ENCODE measurements at regions of chr2 and their contacts with region 1.

Region 1: GRCh38 chr2:161160226-161161069 is at the start of gene TANK:
- DNase-seq: peak; percentile 99
- H3K4me3 Mint-ChIP-seq: peak within 1 kb of the TSS; percentile 86
- H3K27ac Mint-ChIP-seq: peak within 1 kb of the TSS; percentile 99
- H3K4me1 Mint-ChIP-seq: peaks cover 20% of the 10 kb centered on the region
- H3K27me3 Mint-ChIP-seq: no peaks in the 10 kb centered on the region
- CTCF ChIP-seq: no peak
- total RNA-seq, gene TANK: 62.0 and 79.6 TPM in 2 replicates

Region 2: DNA sequence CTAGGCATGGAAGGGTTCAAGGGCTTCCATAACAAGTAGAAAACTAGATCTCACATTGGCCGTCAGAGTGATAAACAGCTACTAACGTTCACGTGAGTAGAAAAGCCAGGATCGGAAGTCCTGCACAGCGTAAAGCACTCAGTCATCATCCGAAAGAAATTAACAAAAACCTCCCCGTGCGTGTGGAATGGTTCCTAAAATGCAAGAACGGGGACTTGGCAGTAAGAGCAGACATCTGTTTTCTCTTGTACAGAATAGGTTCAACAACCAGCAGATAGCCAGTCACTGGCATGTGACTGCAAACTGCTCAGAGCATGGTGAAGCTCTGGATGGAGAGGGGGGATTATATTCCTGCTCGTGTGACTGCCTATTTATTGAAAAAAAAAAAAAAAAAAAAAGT is 853.5 kb before region 1 on chr2:
- CTCF ChIA-PET with region 1: no interaction called
- POLR2A ChIA-PET with region 1: no interaction called
- intact Hi-C with region 1: no loop called
- DNase-seq: no peak
- H3K4me3 Mint-ChIP-seq: no peak overlapping the region
- H3K27ac Mint-ChIP-seq: no peak overlapping the region
- H3K4me1 Mint-ChIP-seq: peaks cover 24% of the 10 kb centered on the region
- H3K27me3 Mint-ChIP-seq: no peaks in the 10 kb centered on the region
- CTCF ChIP-seq: no peak

Region 3: DNA sequence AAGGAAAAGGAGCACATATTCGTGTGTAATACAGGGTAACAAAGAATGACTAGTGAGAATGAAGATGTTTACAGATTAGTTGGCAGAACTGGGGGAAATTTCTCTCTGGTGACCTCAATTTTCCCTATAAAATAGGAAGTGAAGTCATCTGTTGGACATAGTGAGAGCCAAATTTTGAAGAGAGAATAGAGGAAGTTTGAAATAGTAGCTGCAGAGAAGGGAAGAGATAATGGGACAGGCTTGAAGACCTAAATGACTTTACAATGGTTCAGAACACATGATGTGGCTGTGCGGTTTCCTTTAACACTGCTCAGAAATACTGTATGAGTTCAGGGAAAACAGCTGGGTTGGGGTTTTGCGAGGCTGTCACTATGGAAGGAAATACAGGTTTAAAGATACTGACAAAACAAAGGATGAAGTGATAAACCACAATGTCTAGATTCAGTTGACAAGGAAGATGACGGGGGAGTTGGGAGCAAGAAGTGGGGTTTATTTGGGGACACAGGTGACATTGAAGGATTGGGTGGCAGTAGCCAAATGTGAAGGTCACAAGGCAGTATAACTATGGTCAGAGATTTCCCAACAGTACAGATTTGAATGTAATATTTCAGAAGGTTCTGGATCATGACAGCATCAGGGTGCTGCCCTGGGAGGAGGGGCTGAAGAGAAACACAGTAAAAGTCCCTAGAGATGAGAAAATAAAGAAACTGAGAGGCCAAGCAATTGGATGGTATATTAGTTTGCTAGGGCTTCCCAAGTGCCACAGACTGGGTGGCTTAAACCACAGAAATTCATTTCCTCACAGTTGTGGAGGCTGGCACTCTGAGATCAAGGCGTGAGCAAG is 82.9 kb before region 1 on chr2:
- CTCF ChIA-PET with region 1: no interaction called
- POLR2A ChIA-PET with region 1: interaction called, 11 read pairs
- intact Hi-C with region 1: loop called (anchors 2 kb)
- DNase-seq: no peak
- H3K4me3 Mint-ChIP-seq: no peak overlapping the region
- H3K27ac Mint-ChIP-seq: peak overlapping the region; percentile 96
- H3K4me1 Mint-ChIP-seq: peaks cover 28% of the 10 kb centered on the region
- H3K27me3 Mint-ChIP-seq: no peaks in the 10 kb centered on the region
- CTCF ChIP-seq: no peak

Region 4: DNA sequence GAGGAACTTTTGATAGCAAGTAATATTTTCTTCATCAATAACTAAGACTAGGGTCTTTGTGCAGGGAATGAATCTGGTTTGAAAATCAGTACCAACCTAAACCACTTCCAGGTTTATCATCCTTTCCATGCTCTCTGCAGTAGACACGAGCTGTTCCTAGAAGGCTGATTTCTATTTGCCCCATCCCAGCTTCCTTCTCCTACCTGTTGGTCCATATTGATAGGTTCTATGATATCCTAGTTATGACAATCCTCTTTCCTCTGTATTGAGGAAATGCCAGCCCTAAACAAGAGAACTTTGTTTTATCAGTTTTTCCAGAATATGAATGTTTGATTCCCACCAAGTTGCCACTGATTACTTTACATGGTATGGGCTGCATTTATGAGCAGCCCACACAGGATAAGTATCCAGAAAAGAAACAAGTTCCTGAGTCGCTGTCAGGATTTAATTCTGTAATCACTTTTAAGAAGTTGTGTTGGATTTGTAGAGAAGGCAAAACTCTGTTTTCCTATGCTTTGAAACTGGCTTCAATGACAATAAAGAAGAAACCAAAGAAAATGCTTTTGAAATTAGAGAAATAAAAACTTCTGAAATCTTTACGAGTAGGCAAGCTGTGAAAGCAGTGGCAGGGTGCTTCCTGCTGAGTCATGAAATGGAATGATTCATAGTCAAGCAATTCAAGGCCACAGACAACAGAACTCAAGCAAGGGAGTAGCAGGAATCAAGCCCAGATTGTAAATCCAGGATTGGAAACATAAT is 37.5 kb before region 1 on chr2:
- CTCF ChIA-PET with region 1: no interaction called
- POLR2A ChIA-PET with region 1: interaction called, 7 read pairs
- intact Hi-C with region 1: loop called (anchors 1 kb)
- DNase-seq: peak; percentile 86
- H3K4me3 Mint-ChIP-seq: no peak overlapping the region
- H3K27ac Mint-ChIP-seq: peak overlapping the region; percentile 64
- H3K4me1 Mint-ChIP-seq: peaks cover 12% of the 10 kb centered on the region
- H3K27me3 Mint-ChIP-seq: no peaks in the 10 kb centered on the region
- CTCF ChIP-seq: no peak

Region 5: DNA sequence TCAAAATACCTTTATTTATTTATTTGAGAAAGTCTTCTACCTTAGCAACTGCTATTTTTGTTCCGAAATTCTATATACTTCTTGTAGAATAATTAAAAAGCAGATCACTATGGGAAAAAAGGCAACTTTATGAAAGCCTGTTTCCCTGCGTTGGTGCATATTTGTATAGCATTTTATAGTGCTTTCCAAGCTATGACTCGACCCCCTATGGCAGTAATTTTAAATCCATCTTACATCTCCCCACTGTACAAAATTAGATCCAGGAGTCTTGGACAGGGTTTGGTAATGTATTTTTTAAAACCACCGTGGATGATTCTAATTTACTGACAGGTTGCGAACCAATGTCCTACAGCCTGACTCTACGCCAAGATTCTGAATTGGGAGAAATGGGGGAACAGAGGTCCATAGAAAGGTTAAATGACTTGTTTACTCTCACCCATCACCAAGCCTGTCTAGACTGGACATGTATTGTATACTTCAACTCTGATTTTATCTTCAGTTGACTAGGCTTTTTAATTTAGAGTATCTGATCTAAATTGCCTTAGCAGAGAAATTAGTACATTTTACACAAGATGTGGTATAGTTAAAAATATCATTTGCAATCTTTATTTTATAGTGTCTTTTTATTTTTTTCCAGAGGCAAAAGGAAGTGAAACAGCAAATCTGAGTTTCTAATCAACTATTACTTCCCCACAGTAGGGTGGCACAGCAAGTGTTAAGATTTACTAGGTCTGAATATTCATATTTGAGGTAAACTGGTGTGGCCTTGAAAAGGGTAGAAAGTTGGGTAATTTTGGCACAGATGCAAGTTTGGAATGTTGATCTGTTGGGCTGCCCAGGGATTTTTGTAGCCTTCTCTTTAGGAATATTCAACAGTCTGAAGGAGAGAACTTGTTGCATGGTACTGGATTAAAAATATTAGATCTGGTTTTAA is 10.2 kb after region 1 on chr2:
- CTCF ChIA-PET with region 1: no interaction called
- POLR2A ChIA-PET with region 1: interaction called, 38 read pairs
- intact Hi-C with region 1: no loop called
- DNase-seq: peak; percentile 67
- H3K4me3 Mint-ChIP-seq: peak overlapping the region; percentile 46
- H3K27ac Mint-ChIP-seq: peak overlapping the region; percentile 83
- H3K4me1 Mint-ChIP-seq: peaks cover 49% of the 10 kb centered on the region
- H3K27me3 Mint-ChIP-seq: no peaks in the 10 kb centered on the region
- CTCF ChIP-seq: no peak

Region 6: GRCh38 chr2:161308178-161308955 is 147.9 kb after region 1 on chr2 and contains the start of gene PSMD14:
- CTCF ChIA-PET with region 1: no interaction called
- POLR2A ChIA-PET with region 1: no interaction called
- intact Hi-C with region 1: no loop called
- DNase-seq: peak; percentile 97
- H3K4me3 Mint-ChIP-seq: peak within 1 kb of the TSS; percentile 91
- H3K27ac Mint-ChIP-seq: peak within 1 kb of the TSS; percentile 97
- H3K4me1 Mint-ChIP-seq: peaks cover 14% of the 10 kb centered on the region
- H3K27me3 Mint-ChIP-seq: no peaks in the 10 kb centered on the region
- CTCF ChIP-seq: no peak
- total RNA-seq, gene PSMD14: 130 and 135 TPM in 2 replicates